ENCODE measurements at regions of chr18 and their contacts with region 1.

Region 1: GRCh38 chr18:76398896-76399612 is 96.0 kb downstream of the ZNF516 start:
- DNase-seq: peak; percentile 68 to 83 (median 79)
- H3K4me3 ChIP-seq: no peak overlapping the region
- H3K27ac ChIP-seq: no peak overlapping the region
- H3K4me1 ChIP-seq: peaks cover 0 to 5% (median 0%) of the 10 kb centered on the region in 4 experiments
- H3K27me3 ChIP-seq: no peaks in the 10 kb centered on the region

Region 2: DNA sequence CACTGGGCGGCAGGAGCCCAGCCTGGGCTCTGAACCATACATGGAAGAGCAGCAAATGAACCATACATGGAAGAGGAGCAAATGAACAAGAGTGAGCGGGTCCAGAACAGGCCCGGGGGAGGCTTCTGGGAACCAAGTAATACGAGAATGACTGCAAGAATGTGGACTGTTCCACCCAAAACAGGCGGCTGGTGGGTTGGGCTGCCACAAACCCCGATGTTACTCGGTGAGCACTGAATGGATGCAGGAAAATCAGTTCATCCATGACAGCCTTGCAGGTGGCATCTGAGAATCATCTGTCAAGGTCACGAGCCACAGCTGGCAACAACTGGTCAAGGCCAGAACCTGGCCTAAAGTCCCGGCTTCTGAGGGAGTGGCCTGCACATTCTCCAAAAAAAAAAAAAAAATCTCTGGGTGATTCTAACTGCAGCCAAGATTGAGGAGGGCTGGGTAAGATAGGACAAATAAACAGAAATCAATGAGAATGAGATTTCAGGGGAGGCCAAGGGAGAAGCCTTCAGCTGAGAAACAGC is 10.1 kb before region 1 on chr18:
- CTCF ChIA-PET with region 1: interaction called, 17 read pairs
- POLR2A ChIA-PET with region 1: no interaction called
- DNase-seq: no peak
- H3K4me3 ChIP-seq: no peak overlapping the region
- H3K27ac ChIP-seq: no peak overlapping the region
- H3K4me1 ChIP-seq: peaks cover 0 to 37% (median 31%) of the 10 kb centered on the region in 4 experiments
- H3K27me3 ChIP-seq: no peaks in the 10 kb centered on the region

Region 3: DNA sequence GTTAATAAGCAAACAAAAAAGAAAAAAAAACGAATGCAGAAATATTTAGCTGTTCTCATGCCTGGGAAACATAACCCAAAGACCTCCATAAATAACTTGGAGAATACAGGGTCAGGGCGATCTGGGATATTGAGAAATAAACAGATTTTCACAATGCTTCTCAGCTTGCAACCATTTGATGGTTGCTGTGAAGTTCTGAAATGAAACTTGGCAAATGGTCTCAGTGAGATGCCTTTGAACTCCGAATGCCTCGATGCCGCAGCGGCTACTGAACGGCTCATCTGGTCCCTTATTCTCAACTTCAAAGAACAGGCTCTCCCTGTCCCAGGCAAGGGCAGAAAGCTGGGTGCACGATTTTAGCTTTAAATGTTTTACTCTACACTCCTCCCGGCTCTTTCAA is 17.9 kb after region 1 on chr18:
- CTCF ChIA-PET with region 1: interaction called, 15 read pairs
- POLR2A ChIA-PET with region 1: no interaction called
- DNase-seq: no peak
- H3K4me3 ChIP-seq: no peak overlapping the region
- H3K27ac ChIP-seq: no peak overlapping the region
- H3K4me1 ChIP-seq: no peaks in the 10 kb centered on the region
- H3K27me3 ChIP-seq: no peaks in the 10 kb centered on the region

Region 4: GRCh38 chr18:76620321-76621170 is 221.5 kb after region 1 on chr18:
- CTCF ChIA-PET with region 1: interaction called, 24 read pairs
- POLR2A ChIA-PET with region 1: no interaction called
- DNase-seq: peak; percentile 68 to 83 (median 81)
- H3K4me3 ChIP-seq: peak overlapping the region in 5 of 7 experiments; percentile 29 to 72 (median 54)
- H3K27ac ChIP-seq: no peak overlapping the region
- H3K4me1 ChIP-seq: peaks cover 0 to 35% (median 20%) of the 10 kb centered on the region in 4 experiments
- H3K27me3 ChIP-seq: no peaks in the 10 kb centered on the region

Region 5: DNA sequence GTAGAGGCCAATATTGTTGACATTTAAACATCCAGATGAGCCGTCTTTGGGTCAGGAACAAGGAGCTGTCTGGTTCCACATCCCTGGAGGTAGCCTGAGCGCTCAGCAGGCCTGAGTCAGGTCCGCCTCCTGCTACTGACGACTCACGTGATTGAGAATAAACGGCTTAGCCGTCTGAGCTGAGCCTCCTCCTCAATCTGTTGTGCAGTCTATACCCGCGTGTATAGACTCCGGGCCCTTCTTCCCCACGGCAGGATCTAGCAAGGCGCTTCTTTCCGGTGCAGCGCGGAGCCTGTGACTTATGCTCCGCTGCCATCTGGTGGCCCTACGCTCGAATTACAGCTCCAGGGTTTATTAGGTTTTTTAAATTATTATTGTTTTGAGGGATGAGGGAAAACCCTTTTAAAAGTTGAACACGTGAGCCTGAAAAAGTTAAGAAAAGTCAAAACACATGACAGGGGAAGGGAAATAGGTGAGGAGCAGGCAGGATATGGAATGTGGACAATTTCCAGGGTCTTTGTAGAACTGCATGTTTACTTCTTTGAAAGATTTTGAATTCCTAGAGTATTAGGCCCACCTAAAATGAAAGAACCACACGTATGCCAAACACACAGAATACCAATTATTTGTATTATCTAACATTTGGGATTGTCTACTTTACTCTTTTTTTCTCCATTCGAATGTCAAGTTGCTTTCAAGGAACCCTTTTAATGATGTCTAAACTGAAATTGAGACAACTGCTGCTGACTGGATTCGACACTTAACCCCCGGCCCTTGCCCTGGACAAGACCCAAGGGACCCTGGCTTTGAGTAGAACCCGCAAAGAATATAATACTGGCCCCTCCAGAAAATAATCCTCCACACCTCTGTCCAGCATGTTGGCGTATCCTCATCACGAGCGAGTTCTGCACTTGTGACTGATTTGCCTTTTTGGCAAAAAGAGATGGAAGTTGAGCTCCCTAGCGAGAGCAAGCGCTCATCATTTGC is 310.9 kb after region 1 on chr18:
- CTCF ChIA-PET with region 1: interaction called, 89 read pairs
- POLR2A ChIA-PET with region 1: no interaction called
- DNase-seq: peak; percentile 56 to 77 (median 72)
- H3K4me3 ChIP-seq: peak overlapping the region in 1 of 7 experiments; percentile 29
- H3K27ac ChIP-seq: no peak overlapping the region
- H3K4me1 ChIP-seq: peaks cover 0 to 13% (median 10%) of the 10 kb centered on the region in 4 experiments
- H3K27me3 ChIP-seq: no peaks in the 10 kb centered on the region

Measured in common myeloid progenitor, CD34-positive (primary cell).